ENCODE measurements at regions of chr5 and their contacts with region 1.

Region 1: DNA sequence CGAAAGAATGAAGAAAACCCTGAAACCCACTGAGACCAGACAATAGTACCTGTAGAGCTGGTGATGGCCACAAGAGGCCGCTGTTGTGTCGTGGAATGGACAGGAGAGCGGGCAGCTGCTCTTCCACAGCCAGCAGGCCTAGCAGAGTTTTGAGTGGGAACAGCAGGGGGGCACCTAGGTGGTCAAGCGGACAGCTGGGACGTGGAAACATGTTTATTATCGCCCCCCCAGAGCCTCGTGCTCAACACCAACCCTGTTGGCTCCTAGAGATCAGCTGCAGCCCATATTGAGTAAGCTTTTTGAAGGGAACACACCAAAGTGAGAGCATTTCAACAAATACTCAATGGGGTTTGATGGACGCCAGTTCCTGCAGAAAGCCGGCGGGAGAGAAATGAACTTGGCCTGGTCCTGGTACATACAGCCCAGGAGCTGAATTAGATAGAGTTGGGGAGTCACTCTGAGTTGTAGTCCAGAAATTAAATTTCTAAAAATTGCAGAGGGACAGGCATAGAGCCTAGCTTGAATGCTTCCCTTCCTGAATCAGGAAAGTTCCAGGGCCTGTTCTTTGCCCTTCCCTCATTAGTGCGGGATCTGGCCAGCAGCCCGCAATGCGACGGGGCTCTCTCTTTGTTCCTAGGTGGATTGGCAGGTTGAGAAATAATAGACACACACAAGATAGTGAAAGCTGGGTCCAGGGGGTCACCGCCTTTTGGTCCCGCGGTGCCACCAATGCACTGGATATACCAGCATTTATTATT is 33.8 kb downstream of the MFAP3 start:
- DNase-seq: peak; percentile 87
- ATAC-seq: peak; percentile 92
- H3K4me3 Mint-ChIP-seq: no peak overlapping the region
- H3K27ac Mint-ChIP-seq: no peak overlapping the region
- H3K4me1 Mint-ChIP-seq: peaks cover 10% of the 10 kb centered on the region
- H3K27me3 Mint-ChIP-seq: peaks cover 6% of the 10 kb centered on the region
- CTCF ChIP-seq: peak; percentile 92

Region 2: DNA sequence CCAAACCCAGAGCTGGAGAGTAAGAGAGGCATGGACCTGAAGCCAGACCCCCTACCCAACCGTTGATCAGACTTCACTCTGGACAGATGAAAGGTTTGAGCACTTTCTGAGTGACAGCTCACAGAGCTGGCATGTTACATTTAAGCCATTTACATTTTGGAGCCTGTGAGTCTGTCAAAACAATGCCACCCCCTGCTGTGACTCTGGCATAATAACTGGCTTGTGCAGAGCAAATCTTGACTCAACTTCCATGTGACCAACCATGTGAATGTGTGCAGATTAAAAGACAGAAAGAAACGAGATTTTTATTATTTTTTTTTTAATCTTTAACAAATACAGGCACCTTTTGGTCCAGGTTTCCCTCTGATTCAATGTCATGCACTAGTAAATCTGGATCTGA is 14.7 kb after region 1 on chr5:
- CTCF ChIA-PET with region 1: interaction called, 14 read pairs
- POLR2A ChIA-PET with region 1: interaction called, 3 read pairs
- DNase-seq: no peak
- ATAC-seq: no peak
- H3K4me3 Mint-ChIP-seq: no peak overlapping the region
- H3K27ac Mint-ChIP-seq: no peak overlapping the region
- H3K4me1 Mint-ChIP-seq: peaks cover 28% of the 10 kb centered on the region
- H3K27me3 Mint-ChIP-seq: peaks cover 13% of the 10 kb centered on the region
- CTCF ChIP-seq: no peak

Region 3: DNA sequence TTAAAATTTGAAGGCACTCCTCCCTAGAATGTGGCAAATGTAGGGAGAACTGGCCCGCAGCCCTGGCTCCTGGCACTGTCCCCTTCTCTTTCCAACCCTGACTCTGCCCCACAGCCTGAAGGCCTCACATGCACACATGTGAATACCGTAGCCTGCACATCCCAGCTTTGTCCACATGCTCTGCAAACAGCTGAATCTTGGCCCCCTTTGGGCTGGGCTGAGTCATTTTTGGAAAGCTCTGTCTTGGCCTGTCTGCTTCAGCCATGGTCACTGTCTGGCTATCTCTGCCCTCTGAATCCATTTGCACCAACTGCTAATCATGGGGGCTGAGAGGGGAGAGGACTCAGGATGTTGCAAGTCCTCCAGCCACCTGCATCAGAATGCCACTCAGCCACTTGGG is 95.8 kb after region 1 on chr5:
- CTCF ChIA-PET with region 1: interaction called, 13 read pairs
- POLR2A ChIA-PET with region 1: interaction called, 3 read pairs
- DNase-seq: no peak
- ATAC-seq: no peak
- H3K4me3 Mint-ChIP-seq: no peak overlapping the region
- H3K27ac Mint-ChIP-seq: no peak overlapping the region
- H3K4me1 Mint-ChIP-seq: peaks cover 67% of the 10 kb centered on the region
- H3K27me3 Mint-ChIP-seq: no peaks in the 10 kb centered on the region
- CTCF ChIP-seq: no peak

Region 4: DNA sequence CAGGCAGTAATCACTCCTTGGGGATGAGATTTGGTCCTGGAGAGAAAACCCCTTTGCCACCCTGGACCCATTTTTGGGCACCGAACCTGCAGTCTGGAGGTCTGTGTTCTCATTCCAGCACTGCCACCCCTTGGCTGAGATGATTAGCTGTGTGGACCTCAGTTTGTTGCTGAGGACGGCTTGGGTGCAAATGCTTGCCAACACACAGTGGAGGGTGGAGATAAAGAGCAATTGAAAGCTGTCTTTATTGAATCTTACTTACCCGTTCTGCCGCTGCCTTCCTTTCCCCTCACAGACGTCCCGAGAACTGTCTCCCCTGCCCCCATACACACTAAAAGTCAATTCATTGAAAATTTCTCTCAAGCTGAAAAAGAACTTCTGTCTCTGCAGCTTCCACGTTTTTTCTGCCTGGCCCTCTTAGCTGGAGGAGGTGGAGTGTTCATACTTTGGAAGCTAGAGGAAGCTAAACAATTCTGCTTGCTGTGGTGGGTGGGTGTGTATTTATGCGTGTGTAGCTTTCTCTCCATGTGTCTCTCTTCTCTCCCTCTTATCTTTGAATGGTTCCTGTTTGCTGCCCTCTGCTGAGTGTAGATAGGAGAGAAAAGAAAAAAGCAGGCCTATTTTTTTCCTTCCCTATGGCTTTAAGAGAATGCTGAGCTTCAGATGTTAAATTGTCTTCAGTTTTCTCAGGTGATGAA is 124.5 kb after region 1 on chr5:
- CTCF ChIA-PET with region 1: interaction called, 84 read pairs
- POLR2A ChIA-PET with region 1: no interaction called
- DNase-seq: no peak
- ATAC-seq: peak; percentile 34
- H3K4me3 Mint-ChIP-seq: no peak overlapping the region
- H3K27ac Mint-ChIP-seq: no peak overlapping the region
- H3K4me1 Mint-ChIP-seq: peaks cover 68% of the 10 kb centered on the region
- H3K27me3 Mint-ChIP-seq: peaks cover 5% of the 10 kb centered on the region
- CTCF ChIP-seq: no peak

Region 5: DNA sequence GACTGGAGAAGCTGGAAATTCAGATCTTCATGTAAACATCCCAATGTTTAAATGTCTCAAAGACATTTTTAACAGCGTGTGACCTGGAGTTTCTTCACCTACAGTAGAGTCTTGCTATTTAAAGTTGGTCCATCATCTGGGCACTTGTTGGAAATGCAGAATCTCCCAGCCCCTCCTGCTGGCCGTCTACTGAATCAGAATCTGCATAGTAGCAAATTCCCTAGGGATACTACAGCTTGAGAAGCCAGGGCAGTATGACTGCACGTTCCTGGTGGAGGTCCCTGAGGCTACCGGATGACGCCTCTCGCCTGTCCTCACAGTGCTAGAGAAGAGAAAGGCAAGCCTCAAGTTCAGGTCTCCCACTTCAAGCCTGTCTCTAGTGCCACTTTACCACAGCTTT is 388.9 kb after region 1 on chr5:
- CTCF ChIA-PET with region 1: interaction called, 17 read pairs
- POLR2A ChIA-PET with region 1: no interaction called
- DNase-seq: peak; percentile 49
- ATAC-seq: peak; percentile 93
- H3K4me3 Mint-ChIP-seq: no peak overlapping the region
- H3K27ac Mint-ChIP-seq: 0 out of 2 replicates have a peak overlapping the region, but pooled peaks have one; percentile 41
- H3K4me1 Mint-ChIP-seq: peaks cover 7% of the 10 kb centered on the region
- H3K27me3 Mint-ChIP-seq: peaks cover 7% of the 10 kb centered on the region
- CTCF ChIP-seq: no peak

Measured in WTC11 (cell line).